Naive thymus-derived CD4-positive, alpha-beta T cell (primary cell): ENCODE measurements at regions of chrX and their contacts with region 1.

Region 1: GRCh38 chrX:139828830-139829229 is 104.0 kb downstream of the ATP11C start:
- DNase-seq: no peak
- ATAC-seq: no peak
- H3K4me3 ChIP-seq: no peak overlapping the region
- H3K4me3 Mint-ChIP-seq: no peak overlapping the region
- H3K27ac ChIP-seq: no peak overlapping the region
- H3K27ac Mint-ChIP-seq: no peak overlapping the region
- H3K4me1 ChIP-seq: peaks cover 0 to 6% of the 10 kb centered on the region in 2 donors
- H3K4me1 Mint-ChIP-seq: peaks cover 0 to 42% (median 27%) of the 10 kb centered on the region in 7 donors
- H3K27me3 ChIP-seq: no peaks in the 10 kb centered on the region
- H3K27me3 Mint-ChIP-seq: no peaks in the 10 kb centered on the region

Region 2: GRCh38 chrX:139815771-139816170 is 13.1 kb before region 1 on chrX:
- CTCF ChIA-PET with region 1: no interaction called
- POLR2A ChIA-PET with region 1: no interaction called
- intact Hi-C with region 1: loop called in 1 of 2 experiments (anchors 1 kb)
- DNase-seq: no peak
- ATAC-seq: no peak
- H3K4me3 ChIP-seq: no peak overlapping the region
- H3K4me3 Mint-ChIP-seq: peak overlapping the region in 4 of 10 donors; percentile 23 to 58 (median 37)
- H3K27ac ChIP-seq: no peak overlapping the region
- H3K27ac Mint-ChIP-seq: peak overlapping the region in 6 of 9 donors; percentile 39 to 84 (median 47)
- H3K4me1 ChIP-seq: peaks cover 3 to 13% of the 10 kb centered on the region in 2 donors
- H3K4me1 Mint-ChIP-seq: peaks cover 10 to 38% (median 26%) of the 10 kb centered on the region in 7 donors
- H3K27me3 ChIP-seq: no peaks in the 10 kb centered on the region
- H3K27me3 Mint-ChIP-seq: no peaks in the 10 kb centered on the region